ENCODE measurements at regions of chr18 and their contacts with region 1.

Region 1: GRCh38 chr18:65049586-65049985 is 701.2 kb upstream of the CDH7 start:
- DNase-seq: no peak
- H3K4me3 ChIP-seq: no peak overlapping the region
- H3K27ac ChIP-seq: no peak overlapping the region
- H3K4me1 ChIP-seq: no peaks in the 10 kb centered on the region
- H3K27me3 ChIP-seq: no peaks in the 10 kb centered on the region
- CTCF ChIP-seq: no peak

Region 2: GRCh38 chr18:64562651-64563050 is 486.9 kb before region 1 on chr18:
- CTCF ChIA-PET with region 1: no interaction called
- POLR2A ChIA-PET with region 1: no interaction called
- intact Hi-C with region 1: no loop called
- DNase-seq: no peak
- H3K4me3 ChIP-seq: no peak overlapping the region
- H3K27ac ChIP-seq: no peak overlapping the region
- H3K4me1 ChIP-seq: no peaks in the 10 kb centered on the region
- H3K27me3 ChIP-seq: no peaks in the 10 kb centered on the region
- CTCF ChIP-seq: no peak

Region 3: GRCh38 chr18:64747803-64748202 is 301.8 kb before region 1 on chr18:
- CTCF ChIA-PET with region 1: no interaction called
- POLR2A ChIA-PET with region 1: interaction called, 14 read pairs
- intact Hi-C with region 1: no loop called
- DNase-seq: no peak
- H3K4me3 ChIP-seq: no peak overlapping the region
- H3K27ac ChIP-seq: no peak overlapping the region
- H3K4me1 ChIP-seq: no peaks in the 10 kb centered on the region
- H3K27me3 ChIP-seq: no peaks in the 10 kb centered on the region
- CTCF ChIP-seq: no peak

Region 4: DNA sequence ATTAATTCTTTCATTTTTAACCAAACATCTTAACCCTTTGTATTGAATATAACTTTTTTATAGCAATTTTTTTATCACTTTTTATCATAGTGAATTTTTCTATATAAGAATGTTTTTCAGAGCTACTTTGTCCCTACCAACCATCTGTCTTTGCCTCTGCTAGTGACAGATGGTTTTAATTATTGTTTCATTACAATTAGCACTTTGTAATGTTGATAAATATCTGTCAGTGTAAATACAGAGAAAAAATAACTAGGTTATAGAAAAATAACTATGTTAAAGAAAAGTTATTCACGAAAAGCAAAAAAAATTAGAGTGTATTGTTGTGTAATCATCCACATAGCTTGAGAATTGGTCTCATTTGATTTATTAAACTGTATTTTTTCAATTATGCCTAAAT is 1645.3 kb after region 1 on chr18:
- CTCF ChIA-PET with region 1: no interaction called
- POLR2A ChIA-PET with region 1: no interaction called
- intact Hi-C with region 1: no loop called
- DNase-seq: no peak
- H3K4me3 ChIP-seq: no peak overlapping the region
- H3K27ac ChIP-seq: no peak overlapping the region
- H3K4me1 ChIP-seq: no peaks in the 10 kb centered on the region
- H3K27me3 ChIP-seq: no peaks in the 10 kb centered on the region
- CTCF ChIP-seq: no peak

Measured in PC-9 (cell line).